ENCODE measurements at regions of chr22 and their contacts with region 1.

Region 1: DNA sequence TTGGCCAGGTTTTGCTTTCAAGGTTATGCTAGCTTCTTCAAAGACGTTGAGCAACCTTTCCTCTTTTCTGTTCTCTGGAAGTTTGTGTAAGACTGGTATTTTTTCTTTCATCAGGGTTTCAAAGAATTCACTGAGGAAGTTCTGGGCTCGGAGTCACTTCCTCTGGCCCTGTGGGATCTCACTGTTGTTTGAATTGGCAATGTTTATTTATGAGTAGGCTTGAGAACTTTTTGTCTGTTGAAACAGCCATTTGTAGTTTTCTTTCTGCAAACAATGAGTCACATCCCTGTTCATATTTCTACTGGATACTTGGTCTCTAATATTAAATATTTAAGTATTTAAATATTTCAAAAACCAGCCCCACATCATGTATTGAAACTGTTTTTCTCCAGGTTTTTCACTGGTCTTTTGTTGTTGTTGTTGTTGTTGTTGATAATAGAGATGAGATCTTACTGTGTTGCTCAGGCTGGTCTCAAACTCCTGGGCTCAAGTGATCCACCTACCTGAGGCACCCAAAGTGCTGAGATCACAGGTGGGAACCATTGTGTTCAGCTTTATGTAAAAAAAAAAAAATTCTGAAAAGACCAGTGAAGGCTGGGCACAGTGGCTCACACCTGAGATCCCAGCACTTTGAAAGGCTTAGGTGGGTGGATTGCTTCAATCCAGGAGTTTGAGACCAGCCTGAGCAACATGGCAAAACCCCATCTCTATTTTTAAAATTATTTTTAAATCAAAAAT is 26.9 kb downstream of the SUSD2 start:
- DNase-seq: peak; percentile 98
- ATAC-seq: peak; percentile 82
- H3K4me3 ChIP-seq: no peak overlapping the region
- H3K27ac ChIP-seq: peak overlapping the region; percentile 96
- H3K4me1 ChIP-seq: peaks cover 24% of the 10 kb centered on the region
- H3K27me3 ChIP-seq: no peaks in the 10 kb centered on the region
- CTCF ChIP-seq: no peak
- POLR2A ChIP-seq: no peak
- RAD21 ChIP-seq: no peak

Region 2: DNA sequence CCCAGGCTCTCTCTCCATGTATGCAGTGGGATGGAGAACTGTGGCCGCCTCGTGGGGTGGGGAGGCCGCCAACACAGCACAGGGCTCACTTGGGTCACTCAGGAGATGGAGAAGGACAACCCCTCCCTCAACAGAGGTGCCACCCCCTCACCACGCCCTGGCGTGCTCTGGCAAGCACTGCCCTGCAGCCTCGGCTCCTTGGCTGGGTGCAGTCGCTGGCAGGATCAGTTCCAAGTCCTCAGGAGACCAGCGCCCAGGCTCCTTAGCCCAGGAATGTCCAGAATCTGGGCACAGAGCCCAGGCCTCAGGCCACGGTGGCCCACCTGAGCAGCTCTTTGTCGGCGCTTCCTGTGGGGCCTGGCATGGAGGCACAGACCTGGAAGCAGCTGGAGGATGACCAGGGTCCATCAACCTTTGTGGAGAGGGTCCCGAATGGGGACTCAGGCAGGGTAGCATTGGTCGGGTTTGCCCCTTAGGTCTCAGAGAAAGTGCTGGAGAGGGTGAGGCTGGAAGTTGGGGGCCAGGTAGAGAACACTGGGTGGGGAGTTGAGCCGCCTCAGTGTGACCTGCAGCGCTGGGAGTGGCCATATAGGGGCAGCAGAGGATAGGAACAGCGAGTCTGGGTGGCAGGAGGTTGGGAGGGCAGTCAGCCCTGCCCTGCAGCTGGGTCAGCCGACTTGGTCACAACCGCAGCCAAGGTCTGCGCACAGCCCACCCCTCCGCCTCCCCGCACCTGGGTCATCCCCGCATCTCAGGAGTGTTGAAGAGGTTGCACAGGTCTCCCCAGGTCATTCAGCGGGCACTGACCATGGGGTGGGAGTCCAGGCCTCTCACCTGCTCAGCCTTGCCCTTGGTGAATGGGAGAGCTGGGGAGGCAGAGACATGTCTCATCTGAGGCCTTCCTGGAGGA is 18.7 kb before region 1 on chr22:
- CTCF ChIA-PET with region 1: interaction called, 3 read pairs
- POLR2A ChIA-PET with region 1: no interaction called
- dilution Hi-C with region 1: no loop called
- in situ Hi-C with region 1: no loop called
- intact Hi-C with region 1: loop called (anchors 1 kb)
- DNase-seq: peak; percentile 50
- ATAC-seq: peak; percentile 100
- H3K4me3 ChIP-seq: no peak overlapping the region
- H3K27ac ChIP-seq: peak overlapping the region; percentile 16
- H3K4me1 ChIP-seq: peaks cover 10% of the 10 kb centered on the region
- H3K27me3 ChIP-seq: no peaks in the 10 kb centered on the region
- CTCF ChIP-seq: peak; percentile 98
- POLR2A ChIP-seq: peak; percentile 61; the same call in 1 of the 2 replicates
- RAD21 ChIP-seq: peak; percentile 99

Region 3: DNA sequence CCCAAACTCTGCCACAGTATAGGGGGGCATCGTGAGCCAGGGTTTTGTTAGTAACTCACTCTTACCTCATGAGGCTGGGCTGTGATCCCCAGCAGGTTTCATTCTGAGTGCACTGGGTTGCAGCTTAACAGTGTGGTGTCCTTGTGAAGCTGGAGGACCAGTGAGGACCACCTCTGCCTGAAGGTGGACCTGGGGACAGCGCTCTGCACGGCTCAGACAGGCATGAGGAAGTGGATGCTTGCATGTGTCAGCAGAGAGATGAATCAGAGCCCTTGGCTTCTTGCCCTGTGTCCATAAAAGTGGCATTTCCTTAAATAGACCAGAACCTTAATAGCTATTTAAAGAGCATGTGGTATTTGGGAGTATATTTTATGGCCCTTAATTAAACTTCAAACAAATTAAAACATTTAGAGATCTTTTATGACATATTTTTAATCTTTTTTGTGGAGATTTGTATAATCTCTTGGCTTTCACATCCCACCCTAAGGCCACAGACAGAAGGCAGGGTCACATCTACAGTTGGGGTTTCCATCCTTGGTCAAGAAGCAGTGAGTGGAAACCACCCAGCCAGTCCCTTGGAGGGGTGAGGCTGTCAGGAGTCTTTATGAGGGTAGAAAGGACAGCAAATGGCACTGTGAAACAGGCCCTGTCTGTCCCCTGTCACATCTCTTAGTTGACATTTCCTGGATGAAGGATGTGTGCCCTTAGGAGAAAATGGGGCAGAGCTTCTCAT is 194.4 kb after region 1 on chr22:
- CTCF ChIA-PET with region 1: no interaction called
- POLR2A ChIA-PET with region 1: no interaction called
- dilution Hi-C with region 1: no loop called
- in situ Hi-C with region 1: no loop called
- intact Hi-C with region 1: no loop called
- DNase-seq: peak; percentile 94
- ATAC-seq: peak; percentile 74
- H3K4me3 ChIP-seq: no peak overlapping the region
- H3K27ac ChIP-seq: no peak overlapping the region; the same call in 1 of the 2 replicates
- H3K4me1 ChIP-seq: peaks cover 40% of the 10 kb centered on the region
- H3K27me3 ChIP-seq: no peaks in the 10 kb centered on the region
- CTCF ChIP-seq: no peak
- POLR2A ChIP-seq: no peak
- RAD21 ChIP-seq: no peak

Measured in IMR-90 (cell line).